ENCODE measurements at regions of chr12 and their contacts with region 1.

Region 1: DNA sequence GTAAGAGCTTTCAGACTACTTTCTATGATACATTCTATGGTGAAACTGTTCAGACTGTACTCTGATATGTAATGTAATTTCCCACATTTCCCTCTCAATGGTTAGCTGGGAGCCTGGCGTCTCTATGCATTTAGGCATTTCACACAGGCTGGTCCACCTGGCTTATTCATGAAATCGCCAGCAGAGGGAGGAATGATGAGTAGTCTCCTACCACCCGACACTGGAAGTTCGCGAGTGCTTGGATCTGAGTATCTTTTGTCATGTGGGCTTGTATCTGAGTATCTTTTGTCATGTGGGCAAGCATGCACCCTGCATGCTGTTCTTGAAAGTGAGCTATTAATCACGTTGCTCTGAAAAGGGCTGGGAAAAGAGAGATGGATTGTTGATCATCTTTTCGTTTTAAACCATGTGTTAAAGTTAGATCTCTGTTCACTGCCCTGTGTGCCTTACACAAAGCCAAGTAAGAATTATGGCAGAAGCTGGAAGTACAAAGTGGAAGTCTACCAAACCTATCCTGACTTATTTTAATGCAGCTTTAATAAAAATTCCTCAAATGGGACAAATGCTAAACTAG is 235.0 kb downstream of the ATP23 start:
- DNase-seq: peak in 1 of 3 donors; percentile 34
- ATAC-seq: no peak
- H3K4me3 ChIP-seq: no peak overlapping the region
- H3K27ac ChIP-seq: no peak overlapping the region
- H3K4me1 ChIP-seq: no peaks in the 10 kb centered on the region
- H3K27me3 ChIP-seq: no peaks in the 10 kb centered on the region

Region 2: GRCh38 chr12:58225203-58225877 is 49.0 kb after region 1 on chr12:
- intact Hi-C with region 1: no loop called
- DNase-seq: no peak
- ATAC-seq: no peak
- H3K4me3 ChIP-seq: no peak overlapping the region
- H3K27ac ChIP-seq: no peak overlapping the region
- H3K4me1 ChIP-seq: no peaks in the 10 kb centered on the region
- H3K27me3 ChIP-seq: no peaks in the 10 kb centered on the region

Region 3: GRCh38 chr12:58291106-58291505 is 114.7 kb after region 1 on chr12:
- intact Hi-C with region 1: loop called in 1 of 4 experiments (anchors 10 kb)
- DNase-seq: no peak
- ATAC-seq: no peak
- H3K4me3 ChIP-seq: no peak overlapping the region
- H3K27ac ChIP-seq: no peak overlapping the region
- H3K4me1 ChIP-seq: no peaks in the 10 kb centered on the region
- H3K27me3 ChIP-seq: no peaks in the 10 kb centered on the region